PC-3 (cell line): ENCODE measurements at regions of chr13 and their contacts with region 1.

Region 1: GRCh38 chr13:106610486-106610885 is 42.5 kb upstream of the ARGLU1 start:
- DNase-seq: peak; percentile 56
- ATAC-seq: peak; percentile 100
- H3K4me3 ChIP-seq: no peak overlapping the region
- H3K27ac ChIP-seq: no peak overlapping the region
- H3K4me1 ChIP-seq: peaks cover 8% of the 10 kb centered on the region; the same call in 1 of the 2 replicates
- H3K27me3 ChIP-seq: no peaks in the 10 kb centered on the region
- CTCF ChIP-seq: no peak

Region 2: DNA sequence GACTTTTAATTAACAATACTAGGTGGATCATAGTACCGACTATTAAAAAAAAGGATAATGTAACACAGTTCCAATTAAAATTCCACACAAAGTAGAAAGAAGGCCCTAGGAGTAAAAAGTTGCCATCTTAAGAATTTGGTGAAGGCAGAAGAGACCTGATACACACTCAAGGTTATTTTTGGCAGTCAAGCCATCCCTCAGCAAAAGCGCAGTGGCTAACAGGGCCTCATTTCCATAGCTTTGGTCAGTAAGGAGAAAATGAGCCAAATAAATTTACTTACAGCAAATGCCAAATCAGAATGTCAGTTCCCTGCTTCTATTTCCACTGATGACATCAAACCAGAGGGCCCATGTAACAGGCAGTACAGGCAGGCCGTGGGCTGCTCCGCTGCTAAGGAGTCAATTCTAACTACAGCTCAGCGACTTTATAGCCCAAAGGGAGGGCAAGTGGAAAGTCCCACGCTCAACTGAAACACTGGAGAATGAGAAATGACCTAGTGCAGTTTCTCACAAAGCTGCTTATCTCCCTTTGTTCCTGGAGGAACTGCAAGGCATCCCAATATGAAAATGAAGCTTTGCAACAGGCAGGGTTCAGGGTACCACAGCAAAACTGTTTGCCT is 48.8 kb before region 1 on chr13:
- CTCF ChIA-PET with region 1: no interaction called
- POLR2A ChIA-PET with region 1: no interaction called
- intact Hi-C with region 1: no loop called
- DNase-seq: no peak
- ATAC-seq: no peak; the same call in 1 of the 2 replicates
- H3K4me3 ChIP-seq: no peak overlapping the region
- H3K27ac ChIP-seq: no peak overlapping the region
- H3K4me1 ChIP-seq: peaks cover 15% of the 10 kb centered on the region
- H3K27me3 ChIP-seq: no peaks in the 10 kb centered on the region
- CTCF ChIP-seq: no peak

Region 3: DNA sequence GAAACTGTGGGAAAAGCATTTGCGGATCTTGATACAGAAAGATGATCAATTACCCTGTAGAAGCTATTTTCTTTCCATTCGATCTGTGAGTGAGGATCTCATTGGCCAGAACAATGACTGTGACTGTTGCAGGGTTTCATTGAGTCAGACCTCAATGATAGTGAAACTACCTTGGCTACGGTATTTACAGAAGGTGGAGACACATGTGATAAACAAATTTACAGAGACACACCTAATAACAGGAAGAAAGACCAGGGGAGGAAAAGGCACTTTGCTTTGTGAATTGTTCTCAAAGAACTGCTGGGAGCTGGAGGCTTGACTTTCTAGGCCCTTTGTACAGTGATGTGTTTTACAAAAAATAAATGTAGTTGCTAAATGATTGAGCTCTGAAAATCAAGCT is 22.7 kb before region 1 on chr13:
- CTCF ChIA-PET with region 1: no interaction called
- POLR2A ChIA-PET with region 1: no interaction called
- intact Hi-C with region 1: loop called (anchors 1 kb)
- DNase-seq: peak; percentile 31
- ATAC-seq: peak; percentile 94
- H3K4me3 ChIP-seq: no peak overlapping the region
- H3K27ac ChIP-seq: peak overlapping the region; percentile 25; the same call in 1 of the 2 replicates
- H3K4me1 ChIP-seq: peaks cover 6% of the 10 kb centered on the region; the same call in 1 of the 2 replicates
- H3K27me3 ChIP-seq: no peaks in the 10 kb centered on the region
- CTCF ChIP-seq: no peak

Region 4: GRCh38 chr13:106802976-106803375 is 192.5 kb after region 1 on chr13:
- CTCF ChIA-PET with region 1: no interaction called
- POLR2A ChIA-PET with region 1: no interaction called
- intact Hi-C with region 1: no loop called
- DNase-seq: no peak
- ATAC-seq: no peak
- H3K4me3 ChIP-seq: no peak overlapping the region
- H3K27ac ChIP-seq: no peak overlapping the region
- H3K4me1 ChIP-seq: no peaks in the 10 kb centered on the region
- H3K27me3 ChIP-seq: peaks cover 44% of the 10 kb centered on the region
- CTCF ChIP-seq: no peak